Posterior vena cava (tissue), 2 donors: ENCODE measurements at regions of chr3 and their contacts with region 1.

Region 1: GRCh38 chr3:57729334-57730045 is 26.6 kb upstream of the SLMAP start:
- DNase-seq: no peak

Region 2: GRCh38 chr3:58433400-58434169 is 704.1 kb after region 1 on chr3 and contains the start of gene PDHB:
- intact Hi-C with region 1: loop called in 1 of 2 experiments (anchors 5 kb)
- DNase-seq: peak; percentile 98
- total RNA-seq, gene PDHB: 60.4 to 68.7 TPM